OCI-LY7 (cell line): ENCODE measurements at regions of chr9 and their contacts with region 1.

Region 1: GRCh38 chr9:37324261-37324683 is 98.2 kb upstream of the GRHPR start:
- DNase-seq: peak; percentile 80
- H3K4me3 ChIP-seq: peak overlapping the region; percentile 35
- H3K27ac ChIP-seq: peak overlapping the region; percentile 98
- H3K4me1 ChIP-seq: peaks cover 81% of the 10 kb centered on the region
- CTCF ChIP-seq: no peak

Region 2: GRCh38 chr9:36487482-36488388 is 836.5 kb before region 1 on chr9:
- CTCF ChIA-PET with region 1: no interaction called
- POLR2A ChIA-PET with region 1: no interaction called
- intact Hi-C with region 1: no loop called
- DNase-seq: peak; percentile 95
- H3K4me3 ChIP-seq: peak overlapping the region; percentile 83
- H3K27ac ChIP-seq: peak overlapping the region; percentile 80
- H3K4me1 ChIP-seq: peaks cover 27% of the 10 kb centered on the region
- CTCF ChIP-seq: no peak

Region 3: GRCh38 chr9:37119907-37120842 is 204.1 kb before region 1 on chr9 and contains the start of gene ZCCHC7:
- CTCF ChIA-PET with region 1: no interaction called
- POLR2A ChIA-PET with region 1: interaction called, 13 read pairs
- intact Hi-C with region 1: loop called (anchors 2 kb)
- DNase-seq: peak; percentile 96
- H3K4me3 ChIP-seq: peak within 1 kb of the TSS; percentile 96
- H3K27ac ChIP-seq: peak within 1 kb of the TSS; percentile 65
- H3K4me1 ChIP-seq: peaks cover 43% of the 10 kb centered on the region
- CTCF ChIP-seq: no peak
- total RNA-seq, gene ZCCHC7: 108 and 110 TPM in 2 replicates

Region 4: DNA sequence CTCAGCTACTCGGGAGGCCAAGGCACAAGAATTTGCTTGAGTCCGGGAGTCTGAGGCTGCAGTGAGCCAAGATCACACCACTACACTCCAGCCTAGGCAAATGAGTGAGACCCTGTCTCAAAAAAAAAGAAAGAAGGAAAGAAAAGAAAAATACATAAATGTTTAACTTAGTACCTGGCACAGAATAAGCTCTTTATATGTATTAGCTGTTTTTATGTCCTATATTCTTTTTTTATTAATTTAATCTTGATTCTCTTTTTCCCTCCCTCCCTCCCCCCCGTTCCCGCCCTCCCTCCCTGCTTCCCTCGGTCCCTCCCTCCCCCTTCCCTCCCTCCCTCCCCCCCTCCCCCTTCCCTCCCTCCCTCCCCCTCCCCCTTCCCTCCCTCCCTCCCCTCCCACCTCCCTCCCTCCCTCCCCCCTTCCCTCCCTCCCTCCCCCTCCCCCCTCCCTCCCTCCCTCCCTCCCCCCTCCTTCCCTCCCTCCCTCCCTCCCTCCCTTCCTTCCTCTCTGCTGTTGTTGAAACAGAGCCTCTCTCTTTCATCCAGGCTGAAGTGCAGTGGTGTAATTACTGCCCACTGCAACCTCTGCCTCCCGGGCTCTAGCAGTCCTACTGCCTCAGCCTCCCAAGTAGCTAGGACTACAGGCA is 37.6 kb before region 1 on chr9:
- CTCF ChIA-PET with region 1: no interaction called
- POLR2A ChIA-PET with region 1: interaction called, 15 read pairs
- intact Hi-C with region 1: no loop called
- DNase-seq: peak; percentile 44
- H3K4me3 ChIP-seq: peak overlapping the region; percentile 68
- H3K27ac ChIP-seq: peak overlapping the region; percentile 99
- H3K4me1 ChIP-seq: peaks cover 94% of the 10 kb centered on the region
- CTCF ChIP-seq: no peak

Region 5: GRCh38 chr9:37302277-37302676 is 22.0 kb before region 1 on chr9:
- CTCF ChIA-PET with region 1: interaction called, 6 read pairs
- POLR2A ChIA-PET with region 1: interaction called, 290 read pairs
- intact Hi-C with region 1: loop called (anchors 1 kb)
- DNase-seq: peak; percentile 98
- H3K4me3 ChIP-seq: peak overlapping the region; percentile 41
- H3K27ac ChIP-seq: peak overlapping the region; percentile 99
- H3K4me1 ChIP-seq: peaks cover 84% of the 10 kb centered on the region
- CTCF ChIP-seq: no peak

Region 6: DNA sequence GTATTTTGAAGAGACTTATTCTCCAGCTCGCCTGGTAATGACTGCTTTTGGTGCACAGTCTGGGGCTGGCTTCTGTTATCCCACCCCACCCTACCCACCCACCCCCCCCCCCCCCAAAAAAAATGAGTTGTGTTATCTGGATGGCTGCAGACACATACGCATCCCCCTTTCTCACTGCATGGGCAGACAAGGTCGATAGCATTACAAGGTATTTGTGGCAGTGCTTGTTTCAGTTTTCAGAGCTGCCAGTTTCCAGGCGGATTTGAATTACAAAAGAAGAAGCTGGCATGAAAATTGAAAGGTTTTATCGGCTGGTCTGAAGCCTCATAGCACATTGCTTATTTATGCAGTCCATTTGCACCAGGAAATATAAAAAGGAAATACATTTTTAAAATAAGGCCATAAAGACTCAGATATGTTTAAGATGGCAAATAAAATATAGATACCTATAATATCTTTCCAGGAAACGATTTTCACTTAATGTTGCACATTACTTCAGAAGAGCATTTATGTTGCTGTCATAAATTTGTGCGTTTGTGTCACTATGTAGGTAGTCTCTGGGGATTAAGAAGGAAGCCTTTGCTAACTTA is 13.1 kb after region 1 on chr9:
- CTCF ChIA-PET with region 1: no interaction called
- POLR2A ChIA-PET with region 1: interaction called, 10 read pairs
- intact Hi-C with region 1: no loop called
- DNase-seq: peak; percentile 64
- H3K4me3 ChIP-seq: peak overlapping the region; percentile 52
- H3K27ac ChIP-seq: peak overlapping the region; percentile 98
- H3K4me1 ChIP-seq: peaks cover 86% of the 10 kb centered on the region
- CTCF ChIP-seq: no peak

Region 7: DNA sequence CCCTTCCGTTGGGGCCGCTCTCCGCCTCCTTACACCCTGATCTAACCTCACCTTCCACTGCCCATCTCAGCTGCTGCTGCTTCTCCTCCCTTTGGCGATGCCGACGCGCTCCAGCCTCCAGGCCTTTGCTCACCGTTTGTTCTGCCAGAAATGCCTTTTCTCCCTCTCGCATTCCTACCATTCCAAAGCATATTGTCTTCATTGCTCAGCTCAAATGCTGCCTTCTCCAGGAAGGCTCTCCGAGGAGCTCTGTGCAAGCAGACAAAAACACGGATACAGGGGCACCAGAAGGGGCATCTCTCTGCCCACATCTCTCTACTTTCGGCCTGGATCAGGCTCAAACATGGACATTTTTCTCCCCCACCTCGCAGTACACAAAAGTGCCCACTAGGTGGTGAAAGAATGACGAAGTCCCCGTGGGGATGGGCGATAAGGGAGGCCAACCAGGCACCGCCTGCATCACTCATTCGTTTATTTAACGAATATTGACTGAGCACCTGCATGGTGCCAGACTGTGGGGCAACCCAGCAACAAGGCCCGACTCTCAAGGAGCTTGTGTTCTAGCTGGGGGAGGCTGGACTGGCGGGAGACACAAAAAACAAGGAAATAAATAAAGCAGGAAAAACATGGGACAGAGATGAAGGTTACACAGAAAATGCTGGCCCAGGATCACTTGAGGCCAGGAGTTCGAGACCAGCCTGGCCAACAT is 90.9 kb after region 1 on chr9:
- CTCF ChIA-PET with region 1: no interaction called
- POLR2A ChIA-PET with region 1: interaction called, 19 read pairs
- intact Hi-C with region 1: no loop called
- DNase-seq: peak; percentile 92
- H3K4me3 ChIP-seq: peak overlapping the region; percentile 55
- H3K27ac ChIP-seq: peak overlapping the region; percentile 97
- H3K4me1 ChIP-seq: peaks cover 94% of the 10 kb centered on the region
- CTCF ChIP-seq: peak; percentile 92